ENCODE measurements at regions of chr22 and their contacts with region 1.

Region 1: GRCh38 chr22:21629262-21630149 is at the start of gene YDJC:
- DNase-seq: peak; percentile 96
- ATAC-seq: peak; percentile 84
- H3K4me3 Mint-ChIP-seq: peak within 1 kb of the TSS; percentile 86
- H3K27ac Mint-ChIP-seq: peak within 1 kb of the TSS; percentile 93
- H3K4me1 Mint-ChIP-seq: peaks cover 47% of the 10 kb centered on the region
- H3K27me3 Mint-ChIP-seq: no peaks in the 10 kb centered on the region
- total RNA-seq, gene YDJC: 43.7 to 44.3 TPM

Region 2: DNA sequence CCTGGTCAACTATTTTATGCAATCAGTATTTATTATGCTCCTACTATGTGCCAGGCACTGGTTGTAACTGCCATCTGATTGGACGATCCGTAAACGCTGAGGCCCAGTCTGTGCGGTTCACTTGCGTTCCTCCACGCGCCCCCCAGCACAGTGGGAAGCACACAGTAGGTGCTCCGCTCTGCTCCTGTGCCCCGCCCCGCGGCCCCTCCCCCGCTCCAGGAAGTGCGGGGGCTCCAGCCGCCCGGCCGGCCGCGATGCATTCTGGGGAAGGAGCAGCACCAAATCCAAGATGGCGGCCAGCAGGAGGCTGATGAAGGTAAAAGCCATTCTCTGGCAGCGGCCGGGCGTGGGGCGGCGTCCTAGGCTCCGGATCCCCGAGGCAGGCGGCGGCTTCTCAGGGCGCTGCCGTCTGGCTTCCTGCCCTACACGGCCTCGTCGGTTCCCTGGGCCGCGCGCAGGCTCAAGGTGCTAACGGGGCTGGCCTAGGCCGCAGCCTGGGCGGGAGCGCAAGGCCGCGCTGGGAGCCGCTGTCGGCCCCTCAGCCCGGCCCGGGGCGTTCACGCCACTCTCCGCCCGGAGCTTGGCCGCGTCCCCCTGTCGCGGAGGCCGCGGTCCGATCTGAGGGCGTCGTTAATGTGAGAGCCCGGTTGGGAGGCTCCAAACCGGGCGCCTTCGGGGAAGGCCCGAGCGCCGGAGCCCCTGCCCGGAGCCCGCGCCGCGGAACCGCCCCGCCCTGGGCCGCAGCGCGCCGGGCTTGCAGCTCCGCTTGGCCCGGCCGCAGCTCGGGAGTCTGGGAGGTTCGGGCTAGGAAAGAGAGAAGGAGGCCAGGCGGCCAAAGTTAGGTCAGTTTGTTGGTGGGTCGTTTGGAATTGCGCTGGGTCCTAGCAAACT is 61.8 kb before region 1 on chr22 and contains the start of gene UBE2L3:
- CTCF ChIA-PET with region 1: interaction called, 27 read pairs
- DNase-seq: peak; percentile 91
- ATAC-seq: peak; percentile 72
- H3K4me3 Mint-ChIP-seq: peak within 1 kb of the TSS; percentile 97
- H3K27ac Mint-ChIP-seq: peak within 1 kb of the TSS; percentile 93
- H3K4me1 Mint-ChIP-seq: peaks cover 40% of the 10 kb centered on the region
- H3K27me3 Mint-ChIP-seq: no peaks in the 10 kb centered on the region
- total RNA-seq, gene UBE2L3: 57.3 to 67.8 TPM

Region 3: GRCh38 chr22:21652010-21652546 is 22.6 kb after region 1 on chr22:
- CTCF ChIA-PET with region 1: interaction called, 241 read pairs
- DNase-seq: peak; percentile 94
- ATAC-seq: peak; percentile 99
- H3K4me3 Mint-ChIP-seq: peak overlapping the region; percentile 88
- H3K27ac Mint-ChIP-seq: peak overlapping the region; percentile 87
- H3K4me1 Mint-ChIP-seq: peaks cover 32% of the 10 kb centered on the region
- H3K27me3 Mint-ChIP-seq: no peaks in the 10 kb centered on the region

Region 4: GRCh38 chr22:21677606-21678443 is 48.3 kb after region 1 on chr22:
- CTCF ChIA-PET with region 1: no interaction called
- DNase-seq: no peak
- ATAC-seq: no peak
- H3K4me3 Mint-ChIP-seq: no peak overlapping the region
- H3K27ac Mint-ChIP-seq: no peak overlapping the region
- H3K4me1 Mint-ChIP-seq: no peaks in the 10 kb centered on the region
- H3K27me3 Mint-ChIP-seq: no peaks in the 10 kb centered on the region

Region 5: DNA sequence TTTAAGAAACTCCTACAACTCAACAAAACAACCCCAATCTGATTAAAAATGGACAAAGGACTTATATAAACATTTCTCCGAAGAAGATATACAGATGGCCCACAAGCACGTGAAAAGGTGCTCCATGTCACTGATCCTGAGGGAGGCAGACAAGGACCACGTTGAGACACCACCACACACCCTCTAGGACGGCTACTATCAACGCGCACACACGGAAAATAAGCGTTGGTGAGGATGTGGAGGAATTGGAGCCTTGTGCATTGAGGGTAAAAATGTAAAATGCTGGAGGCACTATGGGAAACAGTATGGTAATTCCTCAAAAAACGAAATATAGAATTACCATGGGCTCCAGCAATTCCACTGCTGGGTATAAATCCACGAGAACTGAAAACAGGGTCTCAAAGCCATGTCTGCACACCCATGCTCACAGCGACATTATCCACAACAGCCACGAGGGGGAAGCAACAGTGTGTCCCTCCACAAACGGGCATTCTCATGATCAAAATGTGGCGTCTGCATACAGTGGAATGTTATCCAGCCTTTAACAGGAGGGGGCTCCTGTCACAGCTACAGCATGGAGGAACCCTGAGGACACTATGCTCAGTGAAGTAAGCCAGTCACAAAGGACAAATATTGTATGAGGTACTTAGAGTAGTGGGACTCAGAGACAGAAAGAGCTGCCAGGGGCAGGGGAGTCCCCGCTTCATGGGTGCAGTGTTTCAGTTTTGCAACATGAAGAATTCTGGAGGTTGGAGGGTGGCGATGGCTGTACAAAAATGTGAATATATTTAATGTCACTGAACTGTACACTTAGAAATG is 83.6 kb after region 1 on chr22:
- CTCF ChIA-PET with region 1: no interaction called
- DNase-seq: peak; percentile 74
- ATAC-seq: peak; percentile 89
- H3K4me3 Mint-ChIP-seq: no peak overlapping the region
- H3K27ac Mint-ChIP-seq: no peak overlapping the region
- H3K4me1 Mint-ChIP-seq: peaks cover 12% of the 10 kb centered on the region
- H3K27me3 Mint-ChIP-seq: no peaks in the 10 kb centered on the region

Region 6: GRCh38 chr22:21807544-21808529 is 178.3 kb after region 1 on chr22:
- CTCF ChIA-PET with region 1: no interaction called
- DNase-seq: no peak
- ATAC-seq: no peak
- H3K4me3 Mint-ChIP-seq: no peak overlapping the region
- H3K27ac Mint-ChIP-seq: no peak overlapping the region
- H3K4me1 Mint-ChIP-seq: peaks cover 5% of the 10 kb centered on the region
- H3K27me3 Mint-ChIP-seq: no peaks in the 10 kb centered on the region

Measured in activated CD8-positive, alpha-beta memory T cell treated with anti-CD3 and anti-CD28 coated beads, Interleukin-2, amount 10 ng/mL, durations not matched to agents 7 days and 5 days (primary cell).